Heart right ventricle (tissue), 16 donors: ENCODE measurements at regions of chr16 and their contacts with region 1.

Region 1: DNA sequence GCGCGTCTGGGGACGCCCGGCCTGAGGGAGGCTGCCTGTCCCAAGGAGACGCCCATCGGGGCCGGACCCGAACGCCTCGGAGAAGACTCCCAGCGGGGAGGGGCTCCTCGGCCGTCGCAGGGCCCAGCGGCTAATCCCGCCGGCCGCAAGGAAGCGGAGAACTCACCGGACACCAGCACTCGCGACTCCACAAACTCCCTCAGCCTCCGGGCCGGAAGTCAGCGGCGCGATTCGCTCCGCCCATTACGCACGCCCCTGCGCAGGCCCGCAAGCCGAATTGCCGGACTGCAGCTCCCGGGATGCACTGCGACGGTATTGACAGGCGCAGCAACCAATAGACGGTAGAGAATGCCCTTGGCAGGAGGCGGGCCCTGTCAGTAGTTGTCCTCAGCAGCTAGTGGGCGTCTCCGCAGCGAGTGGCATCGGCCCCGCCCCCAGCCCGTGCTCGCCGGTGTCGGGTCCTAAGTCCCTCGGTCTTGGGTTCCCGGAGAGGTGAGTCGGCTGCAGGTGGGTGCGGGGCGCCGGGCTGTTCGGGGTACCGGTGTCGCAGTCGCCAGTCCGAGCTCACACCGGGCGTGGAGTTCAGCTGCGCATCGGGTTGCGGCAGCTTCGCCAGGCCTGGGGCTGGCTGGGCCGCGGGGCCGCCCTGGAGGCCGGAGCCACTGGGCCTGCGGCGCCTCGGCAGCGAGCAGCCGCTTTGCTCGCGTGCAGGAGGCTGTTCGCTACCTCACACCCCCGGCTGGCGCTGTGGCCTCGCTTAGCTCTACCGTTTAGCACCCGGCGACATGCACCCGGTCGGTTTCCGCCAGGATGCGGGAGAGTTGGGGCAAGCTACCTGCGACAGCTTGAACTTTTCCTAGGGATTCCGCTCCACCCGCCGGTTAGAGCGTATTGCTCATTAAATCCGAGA is at the starts of genes ZNF174 and ZSCAN32:
- DNase-seq: peak; percentile 97 to 99
- ATAC-seq: peak; percentile 99 to 100 (median 100)
- H3K4me3 ChIP-seq: peak within 1 kb of the TSS; percentile 64 to 99 (median 85)
- H3K27ac ChIP-seq: peak within 1 kb of the TSS; percentile 16 to 92 (median 86)
- H3K4me1 ChIP-seq: peaks cover 0 to 38% (median 21%) of the 10 kb centered on the region in 9 donors
- H3K27me3 ChIP-seq: no peaks in the 10 kb centered on the region
- CTCF ChIP-seq: peak in 3 of 9 donors; percentile 11 to 37 (median 29)
- total RNA-seq, gene ZNF174: 7.0 to 14.4 (median 9.9) TPM
- total RNA-seq, gene ZSCAN32: 5.0 to 9.0 (median 6.9) TPM

Region 2: DNA sequence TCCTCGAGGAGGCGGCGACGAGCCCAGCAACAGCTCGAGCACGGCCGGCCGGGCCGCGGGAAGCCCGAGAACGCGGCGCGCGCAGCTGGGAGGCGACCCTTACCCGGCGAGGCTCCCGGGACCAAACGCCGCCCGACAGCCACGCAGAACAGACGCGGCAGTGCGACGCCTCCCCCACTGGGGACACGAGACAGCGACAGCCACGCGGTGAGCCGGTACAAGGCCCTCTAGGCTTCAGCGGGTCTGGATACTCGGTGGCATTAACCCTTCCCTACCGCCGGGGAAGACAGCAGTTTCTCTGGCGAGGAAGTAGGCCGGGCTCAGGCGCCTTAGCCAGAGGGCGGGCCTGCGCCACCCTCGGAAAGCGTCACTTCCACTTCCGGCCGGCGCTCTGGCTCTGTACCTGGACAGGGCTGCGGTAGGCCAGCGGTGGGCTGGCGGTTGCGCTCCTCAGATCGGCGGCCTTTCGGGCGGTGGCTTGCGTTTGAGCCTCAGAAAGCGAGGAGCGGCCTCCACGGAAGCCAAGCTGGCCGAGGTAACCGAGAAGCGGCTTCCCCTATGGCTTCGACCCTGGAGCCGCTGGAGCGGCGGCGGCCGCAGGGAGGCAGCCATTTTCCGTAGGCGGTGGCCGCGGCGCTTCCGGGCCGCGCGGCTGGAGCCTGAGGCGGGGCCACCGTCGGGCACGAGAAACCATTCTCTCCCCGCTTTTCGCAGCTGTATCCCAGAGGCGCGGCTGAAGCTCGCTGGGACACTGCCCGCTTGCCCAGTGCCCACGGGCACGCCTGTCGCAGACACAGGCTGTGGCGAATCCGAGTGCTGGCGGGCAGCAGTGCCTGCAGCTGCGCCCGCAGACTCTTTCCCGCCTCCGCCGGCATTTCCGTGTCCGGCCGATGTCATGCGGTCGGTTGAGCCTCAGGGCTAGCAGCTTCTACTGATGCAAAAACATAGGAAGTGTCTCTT is 95.6 kb before region 1 on chr16 and contains the starts of genes TIGD7 and ZNF75A:
- intact Hi-C with region 1: loop called in 4 of 10 experiments (anchors 5 to 10 kb)
- DNase-seq: peak; percentile 86 to 89
- ATAC-seq: peak; percentile 98 to 100 (median 99)
- H3K4me3 ChIP-seq: peak within 1 kb of the TSS; percentile 49 to 89 (median 69)
- H3K27ac ChIP-seq: peak within 1 kb of the TSS; percentile 82 to 98 (median 93)
- H3K4me1 ChIP-seq: peaks cover 0 to 27% (median 17%) of the 10 kb centered on the region in 9 donors
- H3K27me3 ChIP-seq: no peaks in the 10 kb centered on the region
- CTCF ChIP-seq: peak in 4 of 9 donors; percentile 15 to 46 (median 34)
- total RNA-seq, gene TIGD7: 6.5 to 11.2 (median 8.7) TPM
- total RNA-seq, gene ZNF75A: 15.2 to 25.5 (median 21.6) TPM

Region 3: GRCh38 chr16:3348547-3349167 is 52.4 kb before region 1 on chr16:
- intact Hi-C with region 1: no loop called
- DNase-seq: peak in 1 of 2 donors; percentile 9
- ATAC-seq: peak in 6 of 8 donors; percentile 48 to 92 (median 66)
- H3K4me3 ChIP-seq: no peak overlapping the region
- H3K27ac ChIP-seq: peak overlapping the region in 8 of 10 donors; percentile 25 to 65 (median 52)
- H3K4me1 ChIP-seq: peaks cover 0 to 12% (median 0%) of the 10 kb centered on the region in 9 donors
- H3K27me3 ChIP-seq: no peaks in the 10 kb centered on the region
- CTCF ChIP-seq: no peak

Region 4: GRCh38 chr16:3364774-3365427 is 36.1 kb before region 1 on chr16:
- intact Hi-C with region 1: loop called in 1 of 10 experiments (anchors 1 kb)
- DNase-seq: peak; percentile 88
- ATAC-seq: peak; percentile 99 to 100 (median 100)
- H3K4me3 ChIP-seq: peak overlapping the region; percentile 46 to 67 (median 60)
- H3K27ac ChIP-seq: peak overlapping the region; percentile 67 to 92 (median 89)
- H3K4me1 ChIP-seq: peaks cover 0 to 8% (median 0%) of the 10 kb centered on the region in 9 donors
- H3K27me3 ChIP-seq: peaks cover 0 to 17% (median 3%) of the 10 kb centered on the region in 7 donors
- CTCF ChIP-seq: no peak

Region 5: GRCh38 chr16:3457434-3458252 is 56.6 kb after region 1 on chr16:
- intact Hi-C with region 1: loop called in 3 of 10 experiments (anchors 1 to 5 kb)
- DNase-seq: peak; percentile 87 to 91
- ATAC-seq: peak; percentile 86 to 96 (median 94)
- H3K4me3 ChIP-seq: peak overlapping the region; percentile 65 to 95 (median 83)
- H3K27ac ChIP-seq: peak overlapping the region; percentile 92 to 99 (median 98)
- H3K4me1 ChIP-seq: peaks cover 41 to 70% (median 56%) of the 10 kb centered on the region in 9 donors
- H3K27me3 ChIP-seq: no peaks in the 10 kb centered on the region
- CTCF ChIP-seq: peak in 8 of 9 donors; percentile 39 to 71 (median 59)

Region 6: DNA sequence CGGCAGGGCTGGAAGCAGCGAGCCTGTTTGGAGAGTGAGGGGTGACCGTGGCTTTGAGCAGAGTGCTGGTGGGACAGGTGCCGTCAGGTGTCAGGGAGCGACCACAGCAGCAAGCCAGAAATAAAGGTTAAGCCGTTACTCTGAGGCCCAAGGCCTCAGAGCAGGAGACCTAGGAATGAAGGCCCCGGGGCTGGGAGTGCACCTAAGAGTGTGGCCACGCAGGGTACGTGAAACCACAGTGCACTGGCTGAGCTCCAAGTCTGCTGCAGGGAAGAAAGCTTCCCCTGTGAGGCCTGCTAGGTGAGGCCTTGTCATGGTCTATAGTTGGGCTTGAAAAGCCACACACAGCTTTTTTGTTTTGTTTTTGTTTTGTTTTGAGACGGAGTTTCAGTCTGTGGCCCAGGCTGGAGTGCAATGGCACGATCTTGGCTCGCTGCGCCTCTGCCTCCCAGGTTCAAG is 108.5 kb after region 1 on chr16:
- intact Hi-C with region 1: loop called in 1 of 10 experiments (anchors 10 kb)
- DNase-seq: no peak
- ATAC-seq: peak in 1 of 8 donors; percentile 27
- H3K4me3 ChIP-seq: no peak overlapping the region
- H3K27ac ChIP-seq: peak overlapping the region in 1 of 10 donors; percentile 45
- H3K4me1 ChIP-seq: peaks cover 0 to 1% (median 0%) of the 10 kb centered on the region in 9 donors
- H3K27me3 ChIP-seq: no peaks in the 10 kb centered on the region
- CTCF ChIP-seq: no peak